H1 (cell line): ENCODE measurements at regions of chr22 and their contacts with region 1.

Region 1: GRCh38 chr22:38870312-38870746 is 1.7 kb downstream of the CBX6 start:
- DNase-seq: peak in 1 of 2 experiments; percentile 93
- H3K4me3 ChIP-seq: peak overlapping the region in 1 of 4 experiments; percentile 97; a peak in 2 of 8 replicates
- H3K27ac ChIP-seq: no peak overlapping the region
- H3K4me1 ChIP-seq: peaks cover 3 to 15% (median 12%) of the 10 kb centered on the region in 4 experiments; a peak in 5 of 7 replicates
- H3K27me3 ChIP-seq: no peaks in the 10 kb centered on the region; a peak in 2 of 7 replicates
- CTCF ChIP-seq: peak; percentile 87 to 91 (median 89)
- EP300 ChIP-seq: no peak
- POLR2A ChIP-seq: no peak
- RAD21 ChIP-seq: peak; percentile 83 to 87

Region 2: DNA sequence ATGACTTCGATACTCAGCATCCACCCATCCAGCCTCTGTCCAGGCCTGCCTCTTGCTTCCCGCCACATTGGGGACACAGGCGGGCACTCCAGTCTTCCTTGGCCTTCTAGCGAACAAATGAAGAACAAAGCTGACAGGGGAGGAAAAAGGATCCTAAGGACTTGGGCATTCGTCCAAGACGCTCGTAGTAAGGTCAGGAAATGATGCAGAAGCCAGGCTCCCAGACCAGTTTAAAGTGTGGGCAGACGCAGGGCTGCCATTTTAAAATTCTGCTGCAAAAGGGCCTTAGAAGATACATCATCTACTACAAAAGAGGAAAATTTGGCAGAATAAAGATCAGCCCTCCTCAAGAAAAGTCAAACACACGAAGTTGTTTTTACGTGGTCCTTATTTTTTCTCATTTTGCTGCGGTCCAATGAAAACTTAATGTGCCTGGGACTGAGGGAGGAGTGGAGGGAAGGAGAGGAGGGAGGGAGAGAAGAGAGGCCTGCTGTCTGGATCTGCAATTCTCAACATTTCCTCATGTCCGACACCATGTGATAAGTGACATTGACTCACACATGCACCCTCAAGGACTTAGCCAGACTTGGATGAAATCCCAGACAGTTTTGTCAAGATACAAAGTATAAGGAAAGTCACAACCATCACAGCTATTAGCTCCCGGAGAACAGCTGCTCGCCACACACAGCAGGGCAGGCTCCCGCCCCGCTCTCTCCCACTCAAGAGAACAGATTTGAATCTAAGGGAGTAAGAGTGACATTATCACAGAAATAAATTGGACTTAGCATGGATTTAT is 82.1 kb before region 1 on chr22:
- CTCF ChIA-PET with region 1: no interaction called
- POLR2A ChIA-PET with region 1: no interaction called
- DNase-seq: no peak
- H3K4me3 ChIP-seq: no peak overlapping the region
- H3K27ac ChIP-seq: no peak overlapping the region
- H3K4me1 ChIP-seq: peaks cover 0 to 2% (median 0%) of the 10 kb centered on the region in 4 experiments; a peak in 1 of 7 replicates
- H3K27me3 ChIP-seq: no peaks in the 10 kb centered on the region; a peak in 1 of 7 replicates
- CTCF ChIP-seq: no peak
- EP300 ChIP-seq: no peak
- POLR2A ChIP-seq: no peak
- RAD21 ChIP-seq: no peak

Region 3: GRCh38 chr22:38850941-38851849 is 19.1 kb before region 1 on chr22:
- CTCF ChIA-PET with region 1: interaction called, 14 read pairs
- POLR2A ChIA-PET with region 1: interaction called, 3 read pairs
- DNase-seq: no peak
- H3K4me3 ChIP-seq: no peak overlapping the region
- H3K27ac ChIP-seq: no peak overlapping the region
- H3K4me1 ChIP-seq: peaks cover 0 to 3% (median under 1%) of the 10 kb centered on the region in 4 experiments; a peak in 2 of 7 replicates
- H3K27me3 ChIP-seq: peaks cover 0 to 8% (median 2%) of the 10 kb centered on the region in 4 experiments; a peak in 3 of 7 replicates
- CTCF ChIP-seq: no peak
- EP300 ChIP-seq: no peak
- POLR2A ChIP-seq: no peak
- RAD21 ChIP-seq: no peak

Region 4: DNA sequence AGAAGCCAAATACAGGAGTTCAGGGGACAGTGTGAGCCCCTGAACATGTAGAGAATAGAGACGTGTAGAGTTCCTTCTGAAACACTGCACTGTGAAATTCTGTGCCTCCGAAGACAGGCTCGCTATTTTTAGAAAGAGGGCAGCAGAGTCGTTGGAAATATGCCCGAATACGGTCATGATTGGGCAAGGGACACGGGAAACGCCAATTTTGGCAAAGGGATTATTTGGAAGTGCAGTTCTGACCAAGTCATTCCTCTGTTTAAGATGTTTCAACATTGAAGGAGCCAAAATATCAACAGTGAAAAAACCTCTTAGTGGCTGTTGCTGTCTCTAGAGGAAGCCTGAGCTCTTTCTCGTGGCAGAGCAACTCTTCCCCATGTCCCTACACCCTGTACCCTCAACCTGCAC is 11.1 kb after region 1 on chr22:
- CTCF ChIA-PET with region 1: interaction called, 21 read pairs
- POLR2A ChIA-PET with region 1: no interaction called
- DNase-seq: no peak
- H3K4me3 ChIP-seq: no peak overlapping the region
- H3K27ac ChIP-seq: no peak overlapping the region
- H3K4me1 ChIP-seq: no peaks in the 10 kb centered on the region
- H3K27me3 ChIP-seq: no peaks in the 10 kb centered on the region
- CTCF ChIP-seq: no peak
- EP300 ChIP-seq: no peak
- POLR2A ChIP-seq: no peak
- RAD21 ChIP-seq: no peak

Region 5: GRCh38 chr22:38927033-38927781 is 56.9 kb after region 1 on chr22:
- CTCF ChIA-PET with region 1: interaction called, 10 read pairs
- POLR2A ChIA-PET with region 1: no interaction called
- DNase-seq: peak; percentile 57 to 86
- H3K4me3 ChIP-seq: peak overlapping the region; percentile 12 to 45 (median 18); a peak in 5 of 8 replicates
- H3K27ac ChIP-seq: no peak overlapping the region
- H3K4me1 ChIP-seq: peaks cover 0 to 5% (median 3%) of the 10 kb centered on the region in 4 experiments; a peak in 4 of 7 replicates
- H3K27me3 ChIP-seq: no peaks in the 10 kb centered on the region
- CTCF ChIP-seq: peak; percentile 81 to 87 (median 85)
- EP300 ChIP-seq: no peak
- POLR2A ChIP-seq: no peak
- RAD21 ChIP-seq: peak; percentile 61 to 73

Region 6: GRCh38 chr22:38959590-38959989 is 89.3 kb after region 1 on chr22:
- CTCF ChIA-PET with region 1: no interaction called
- POLR2A ChIA-PET with region 1: no interaction called
- DNase-seq: no peak
- H3K4me3 ChIP-seq: no peak overlapping the region
- H3K27ac ChIP-seq: no peak overlapping the region
- H3K4me1 ChIP-seq: no peaks in the 10 kb centered on the region; a peak in 1 of 7 replicates
- H3K27me3 ChIP-seq: no peaks in the 10 kb centered on the region
- CTCF ChIP-seq: no peak
- EP300 ChIP-seq: no peak
- POLR2A ChIP-seq: no peak
- RAD21 ChIP-seq: no peak

Region 7: GRCh38 chr22:38981992-38982927 is 111.9 kb after region 1 on chr22 and contains the start of gene APOBEC3B:
- CTCF ChIA-PET with region 1: interaction called, 12 read pairs
- POLR2A ChIA-PET with region 1: no interaction called
- DNase-seq: no peak
- H3K4me3 ChIP-seq: peak within 1 kb of the TSS in 1 of 4 experiments; percentile 39; a peak in 2 of 8 replicates
- H3K27ac ChIP-seq: peak within 1 kb of the TSS; percentile 54; the same call in 1 of the 2 replicates
- H3K4me1 ChIP-seq: peaks cover 0 to 16% (median 4%) of the 10 kb centered on the region in 4 experiments; a peak in 6 of 7 replicates
- H3K27me3 ChIP-seq: no peaks in the 10 kb centered on the region
- CTCF ChIP-seq: no peak
- EP300 ChIP-seq: no peak
- POLR2A ChIP-seq: no peak; a peak in 1 of 3 replicates
- RAD21 ChIP-seq: no peak
- total RNA-seq, gene APOBEC3B: 14.2 and 16.3 TPM in 2 replicates

Region 8: GRCh38 chr22:39003165-39003638 is 132.9 kb after region 1 on chr22:
- CTCF ChIA-PET with region 1: interaction called, 20 read pairs
- POLR2A ChIA-PET with region 1: interaction called, 4 read pairs
- DNase-seq: peak in 1 of 2 experiments; percentile 77
- H3K4me3 ChIP-seq: no peak overlapping the region
- H3K27ac ChIP-seq: no peak overlapping the region
- H3K4me1 ChIP-seq: peaks cover 0 to 9% (median 2%) of the 10 kb centered on the region in 4 experiments; a peak in 3 of 7 replicates
- H3K27me3 ChIP-seq: no peaks in the 10 kb centered on the region; a peak in 2 of 7 replicates
- CTCF ChIP-seq: peak; percentile 66 to 86 (median 82)
- EP300 ChIP-seq: no peak
- POLR2A ChIP-seq: no peak
- RAD21 ChIP-seq: peak; percentile 58 to 76

Region 9: DNA sequence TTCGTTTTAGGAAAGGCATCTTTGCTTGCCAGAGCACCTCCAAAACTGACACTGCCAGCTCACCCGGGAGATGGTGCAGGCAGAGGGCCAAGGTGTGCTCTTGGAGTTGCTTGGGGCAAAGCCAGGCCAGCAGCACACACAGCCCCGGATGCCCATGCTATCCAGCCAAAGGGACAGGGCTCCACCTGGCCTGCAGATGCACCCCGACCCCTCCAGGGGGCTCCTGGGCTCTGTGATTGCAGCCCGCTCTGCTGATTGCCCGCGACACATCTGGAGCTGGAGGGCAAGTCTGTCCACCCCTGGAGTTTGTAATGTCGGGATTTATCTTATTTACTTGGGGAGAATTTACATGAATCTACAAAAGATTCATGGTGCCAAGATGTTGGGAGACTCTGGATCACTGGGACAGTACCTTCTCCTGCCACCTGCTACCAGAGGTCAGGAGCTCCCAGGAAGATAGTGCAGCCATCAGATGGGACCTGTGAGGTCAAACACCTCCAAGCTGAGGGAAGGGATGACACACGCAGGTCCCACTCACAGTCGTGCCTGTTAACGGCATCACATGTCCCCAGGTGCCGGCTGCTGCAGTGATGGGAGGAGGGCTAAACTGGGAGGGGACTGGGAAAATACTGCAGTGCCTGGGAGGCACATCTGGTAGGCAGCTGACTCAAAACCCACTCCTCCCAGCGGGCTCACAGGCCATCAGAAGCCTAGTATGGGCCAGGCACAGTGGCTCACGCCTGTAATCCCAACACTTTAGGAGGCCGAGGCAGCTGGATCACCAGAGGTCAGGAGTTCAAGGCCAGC is 265.0 kb after region 1 on chr22:
- CTCF ChIA-PET with region 1: interaction called, 14 read pairs
- POLR2A ChIA-PET with region 1: no interaction called
- DNase-seq: peak; percentile 50 to 90
- H3K4me3 ChIP-seq: no peak overlapping the region
- H3K27ac ChIP-seq: no peak overlapping the region
- H3K4me1 ChIP-seq: peaks cover 4 to 17% (median 11%) of the 10 kb centered on the region in 4 experiments; a peak in 4 of 7 replicates
- H3K27me3 ChIP-seq: no peaks in the 10 kb centered on the region
- CTCF ChIP-seq: peak; percentile 85 to 92 (median 92)
- EP300 ChIP-seq: no peak
- POLR2A ChIP-seq: no peak
- RAD21 ChIP-seq: peak; percentile 88 to 94

Region 10: DNA sequence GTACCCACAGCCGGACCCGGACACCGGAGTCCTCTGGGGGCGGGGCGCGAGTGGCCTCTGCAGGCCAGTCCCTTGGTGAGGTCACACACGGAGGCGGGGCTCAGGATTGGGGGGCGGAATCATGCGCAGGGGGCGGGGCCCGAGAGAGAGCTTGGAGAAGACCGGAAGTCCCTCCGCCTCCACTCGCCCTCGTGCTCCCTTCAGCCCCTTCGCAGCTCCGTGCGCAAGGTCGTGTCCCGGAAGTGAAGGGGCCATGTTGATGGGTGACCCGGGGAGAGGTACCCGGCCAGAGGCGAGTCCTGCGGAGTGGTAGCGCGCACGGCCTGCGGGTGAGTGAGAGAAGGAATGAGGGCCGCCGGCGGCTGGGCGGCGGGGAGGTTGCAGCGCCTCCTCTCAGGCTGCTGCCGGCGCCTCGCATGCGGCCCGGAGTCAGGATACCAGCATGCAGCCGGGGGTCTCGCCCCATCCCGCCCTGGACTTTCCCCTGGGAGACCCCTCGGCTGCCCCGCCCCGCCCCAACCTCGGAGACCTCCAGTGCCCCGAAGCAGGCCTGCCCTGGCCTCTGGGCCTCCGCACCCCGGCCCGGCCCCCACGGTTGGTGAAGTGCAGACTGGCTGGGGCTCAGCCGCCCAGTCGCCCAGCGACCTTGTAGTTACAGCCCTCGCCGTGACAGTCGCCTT is 631.9 kb after region 1 on chr22 and contains the start of gene MIEF1:
- CTCF ChIA-PET with region 1: no interaction called
- POLR2A ChIA-PET with region 1: no interaction called
- DNase-seq: peak; percentile 88 to 99
- H3K4me3 ChIP-seq: peak within 1 kb of the TSS; percentile 68 to 88 (median 80)
- H3K27ac ChIP-seq: no peak within 1 kb of the TSS
- H3K4me1 ChIP-seq: peaks cover 3 to 9% (median 4%) of the 10 kb centered on the region in 4 experiments; a peak in 6 of 7 replicates
- H3K27me3 ChIP-seq: peaks cover 0 to 56% (median 36%) of the 10 kb centered on the region in 4 experiments; a peak in 6 of 7 replicates
- CTCF ChIP-seq: no peak
- EP300 ChIP-seq: no peak
- POLR2A ChIP-seq: peak in 1 of 2 experiments; percentile 78; a peak in 2 of 3 replicates
- RAD21 ChIP-seq: no peak
- total RNA-seq, gene MIEF1: 31.4 and 32.7 TPM in 2 replicates